ENCODE measurements at regions of chrX and their contacts with region 1.

Region 1: GRCh38 chrX:1649621-1650020 is 34.8 kb downstream of the ASMT start:
- DNase-seq: no peak
- ATAC-seq: no peak
- H3K4me3 ChIP-seq: no peak overlapping the region
- H3K27ac ChIP-seq: no peak overlapping the region
- H3K4me1 ChIP-seq: no peaks in the 10 kb centered on the region
- H3K27me3 ChIP-seq: no peaks in the 10 kb centered on the region

Region 2: DNA sequence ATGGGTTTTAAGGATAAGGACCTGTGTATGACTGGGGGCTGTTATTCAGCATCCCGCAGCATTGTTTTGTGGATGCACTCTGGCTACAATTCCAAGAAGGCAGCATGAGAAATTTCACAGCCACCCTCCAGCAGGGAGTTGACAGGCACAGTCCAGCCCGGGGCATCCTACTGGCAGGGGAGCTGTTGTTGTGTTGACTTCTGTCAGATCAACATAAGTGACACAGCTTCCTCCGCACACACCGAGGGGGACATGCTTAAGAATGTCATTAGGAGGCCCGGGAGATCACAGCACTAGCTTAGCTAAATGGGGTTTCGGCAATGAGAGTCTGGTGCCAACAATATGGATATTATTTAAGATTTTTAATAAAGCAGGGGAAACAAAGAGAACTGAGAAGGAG is 291.7 kb after region 1 on chrX:
- intact Hi-C with region 1: no loop called
- DNase-seq: no peak
- ATAC-seq: no peak
- H3K4me3 ChIP-seq: no peak overlapping the region
- H3K27ac ChIP-seq: no peak overlapping the region
- H3K4me1 ChIP-seq: no peaks in the 10 kb centered on the region
- H3K27me3 ChIP-seq: no peaks in the 10 kb centered on the region

Region 3: GRCh38 chrX:2589186-2590030 is 939.8 kb after region 1 on chrX:
- intact Hi-C with region 1: loop called (anchors 5 kb)
- DNase-seq: peak in 1 of 2 donors; percentile 21
- ATAC-seq: no peak
- H3K4me3 ChIP-seq: no peak overlapping the region
- H3K27ac ChIP-seq: no peak overlapping the region
- H3K4me1 ChIP-seq: no peaks in the 10 kb centered on the region
- H3K27me3 ChIP-seq: no peaks in the 10 kb centered on the region